ENCODE measurements at regions of chr11 and their contacts with region 1.

Region 1: GRCh38 chr11:8006349-8006977 is 19.3 kb downstream of the EIF3F start:
- DNase-seq: peak in 2 of 4 donors; percentile 49 to 75
- ATAC-seq: peak; percentile 98
- H3K4me3 ChIP-seq: no peak overlapping the region
- H3K27ac ChIP-seq: no peak overlapping the region
- H3K4me1 ChIP-seq: no peaks in the 10 kb centered on the region
- H3K27me3 ChIP-seq: peaks cover 0 to 4% of the 10 kb centered on the region in 2 donors
- CTCF ChIP-seq: peak; percentile 58 to 77

Region 2: GRCh38 chr11:7936615-7937014 is 69.8 kb before region 1 on chr11:
- intact Hi-C with region 1: no loop called
- DNase-seq: no peak
- ATAC-seq: no peak
- H3K4me3 ChIP-seq: no peak overlapping the region
- H3K27ac ChIP-seq: no peak overlapping the region
- H3K4me1 ChIP-seq: no peaks in the 10 kb centered on the region
- H3K27me3 ChIP-seq: no peaks in the 10 kb centered on the region
- CTCF ChIP-seq: no peak

Region 3: DNA sequence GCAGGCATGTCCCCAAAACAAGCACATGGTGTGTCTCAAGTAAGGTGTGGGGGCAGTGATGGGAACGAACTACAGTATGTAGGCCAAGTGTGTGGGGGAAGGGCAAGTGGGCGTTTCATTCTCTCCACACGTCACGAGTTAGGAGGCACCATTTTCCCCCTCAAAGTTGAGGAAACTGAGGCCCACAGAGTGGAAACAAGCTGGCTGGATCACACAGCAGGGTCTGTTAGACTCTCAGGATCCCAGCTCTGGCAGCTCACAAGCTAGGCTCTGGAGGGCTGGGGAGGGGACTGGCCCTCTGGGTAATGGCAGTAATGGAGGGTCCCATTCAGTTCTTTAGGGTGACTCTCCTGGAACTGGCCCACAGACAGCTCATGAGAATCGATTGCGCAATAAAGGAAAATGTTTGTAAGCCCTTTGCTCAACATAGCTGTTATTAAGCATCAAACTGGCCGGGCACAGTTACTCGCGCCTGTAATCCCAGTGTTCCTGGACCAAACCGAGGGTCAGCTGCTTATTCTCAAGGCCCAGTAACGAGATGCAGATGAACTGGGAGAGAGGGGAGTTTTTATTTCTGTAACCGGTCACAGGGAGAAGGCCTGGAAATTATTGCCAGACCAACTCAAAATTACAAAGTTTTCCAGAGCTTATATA is 50.5 kb after region 1 on chr11:
- intact Hi-C with region 1: no loop called
- DNase-seq: peak in 3 of 4 donors; percentile 52 to 81 (median 73)
- ATAC-seq: peak; percentile 64
- H3K4me3 ChIP-seq: no peak overlapping the region
- H3K27ac ChIP-seq: peak overlapping the region in 1 of 2 donors; percentile 26
- H3K4me1 ChIP-seq: no peaks in the 10 kb centered on the region
- H3K27me3 ChIP-seq: no peaks in the 10 kb centered on the region
- CTCF ChIP-seq: no peak

Region 4: DNA sequence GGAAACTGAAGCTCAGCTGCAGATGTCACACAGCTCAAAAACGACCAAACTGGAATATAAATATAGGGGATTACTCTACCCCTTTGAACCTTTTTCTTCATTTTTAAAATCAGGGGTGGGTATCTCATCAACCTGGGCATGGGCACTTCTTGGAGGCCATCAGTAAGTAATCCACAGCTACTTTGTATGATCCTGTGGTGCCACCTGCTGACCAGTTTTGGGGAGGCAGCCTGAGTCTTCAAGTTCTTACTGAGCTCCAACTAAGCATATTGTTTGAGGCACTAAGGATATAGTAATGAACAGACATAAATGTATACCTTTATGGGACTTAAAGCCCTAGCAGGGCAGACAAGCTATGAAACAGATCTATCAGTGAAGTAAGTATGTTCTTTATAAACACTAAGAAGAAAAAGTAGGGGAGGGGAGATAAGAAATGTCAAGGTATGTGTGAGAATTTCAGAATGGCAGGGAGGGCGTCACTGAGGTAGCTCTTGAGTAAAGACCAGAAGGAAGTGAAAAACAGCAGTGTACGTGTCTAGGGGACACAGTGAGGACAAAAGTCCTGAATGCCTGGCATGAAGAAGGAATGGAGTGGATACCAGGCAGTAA is 92.9 kb after region 1 on chr11:
- intact Hi-C with region 1: loop called in 1 of 2 experiments (anchors 5 kb)
- DNase-seq: peak in 2 of 4 donors; percentile 57 to 77
- ATAC-seq: peak; percentile 87
- H3K4me3 ChIP-seq: no peak overlapping the region
- H3K27ac ChIP-seq: no peak overlapping the region
- H3K4me1 ChIP-seq: no peaks in the 10 kb centered on the region
- H3K27me3 ChIP-seq: no peaks in the 10 kb centered on the region
- CTCF ChIP-seq: peak; percentile 61 to 81